ENCODE measurements at regions of chr3 and their contacts with region 1.

Region 1: DNA sequence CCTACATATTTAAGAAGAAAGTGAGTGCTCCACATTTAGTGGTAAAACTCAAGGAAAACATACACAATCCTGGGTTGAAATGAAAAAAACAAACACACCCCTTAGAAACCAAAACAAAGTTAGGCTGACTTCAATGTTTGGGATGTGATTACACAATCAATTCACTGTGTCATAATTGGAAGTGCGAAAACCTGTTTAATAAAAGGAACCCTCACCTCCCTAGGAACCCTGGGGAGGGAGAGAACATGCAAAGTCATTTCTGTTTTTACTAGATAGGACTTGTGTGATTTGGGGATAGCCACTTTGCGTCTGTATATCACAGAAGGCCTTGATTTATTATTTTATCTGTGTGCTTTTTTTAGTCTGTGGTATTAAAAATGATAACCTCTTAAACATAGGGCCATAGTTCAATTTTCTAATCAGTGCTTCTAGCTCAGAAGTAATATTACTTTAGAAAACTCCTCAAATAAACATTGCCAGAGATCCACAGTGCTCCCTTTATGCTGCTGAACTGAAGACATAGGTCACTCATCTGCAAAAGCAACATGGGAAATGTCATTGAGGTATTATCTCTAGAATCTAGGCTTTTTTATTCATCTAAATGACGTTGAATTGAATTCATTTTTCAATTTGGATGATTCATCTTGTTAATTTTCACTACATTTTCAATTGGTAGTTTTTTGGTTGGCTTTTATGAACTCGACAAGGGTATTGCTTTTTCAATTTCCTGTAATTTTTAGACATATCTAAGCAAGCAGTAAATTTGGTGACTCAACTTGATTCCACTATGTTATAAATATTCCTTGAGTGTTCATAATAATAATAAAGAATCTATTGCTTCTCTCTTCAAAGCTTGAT is 275.2 kb downstream of the NFKBIZ start:
- DNase-seq: peak; percentile 94
- H3K4me3 ChIP-seq: no peak overlapping the region
- H3K27ac ChIP-seq: peak overlapping the region; percentile 99
- H3K4me1 ChIP-seq: peaks cover 19% of the 10 kb centered on the region
- H3K27me3 ChIP-seq: no peaks in the 10 kb centered on the region
- CTCF ChIP-seq: no peak

Region 2: GRCh38 chr3:101861212-101861788 is 263.2 kb before region 1 on chr3:
- CTCF ChIA-PET with region 1: no interaction called
- dilution Hi-C with region 1: no loop called
- in situ Hi-C with region 1: no loop called
- intact Hi-C with region 1: loop called (anchors 5 kb)
- DNase-seq: no peak
- H3K4me3 ChIP-seq: no peak overlapping the region
- H3K27ac ChIP-seq: no peak overlapping the region
- H3K4me1 ChIP-seq: no peaks in the 10 kb centered on the region
- H3K27me3 ChIP-seq: no peaks in the 10 kb centered on the region
- CTCF ChIP-seq: no peak

Region 3: DNA sequence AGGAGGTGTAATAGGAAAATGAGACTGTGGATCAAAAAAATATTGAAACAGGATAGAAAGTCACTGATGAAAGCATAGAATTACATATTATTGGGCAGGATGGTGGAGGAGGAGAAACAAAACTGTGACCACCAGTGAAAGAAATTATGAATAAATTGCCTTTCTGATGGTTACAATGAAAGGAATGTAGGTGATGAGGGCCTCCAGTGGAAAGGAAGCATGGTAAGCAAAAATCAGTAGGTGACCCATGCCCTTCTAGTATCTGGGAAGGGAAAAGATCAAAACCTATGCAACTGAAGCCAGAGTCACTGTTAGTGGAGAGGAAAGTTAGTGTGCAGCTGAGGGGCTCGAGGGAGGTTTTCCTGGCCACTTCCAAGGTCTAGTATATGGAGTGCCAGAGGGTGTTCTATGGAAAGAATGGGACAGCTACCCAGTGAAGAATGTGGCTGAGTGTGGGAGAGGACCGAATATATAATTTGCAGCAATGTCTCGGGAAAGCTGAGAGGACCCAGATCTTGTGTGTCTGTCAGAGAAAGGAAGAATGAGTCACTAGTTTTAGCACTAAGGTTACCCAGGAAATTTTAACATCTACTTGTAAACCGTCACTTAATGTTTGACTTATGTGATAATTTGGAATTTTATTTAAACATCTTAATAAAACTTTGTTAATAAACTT is 129.0 kb before region 1 on chr3:
- CTCF ChIA-PET with region 1: no interaction called
- dilution Hi-C with region 1: no loop called
- in situ Hi-C with region 1: no loop called
- intact Hi-C with region 1: loop called (anchors 1 kb)
- DNase-seq: no peak
- H3K4me3 ChIP-seq: no peak overlapping the region
- H3K27ac ChIP-seq: no peak overlapping the region
- H3K4me1 ChIP-seq: peaks cover 30% of the 10 kb centered on the region
- H3K27me3 ChIP-seq: no peaks in the 10 kb centered on the region
- CTCF ChIP-seq: no peak

Region 4: GRCh38 chr3:102195198-102195948 is 70.8 kb after region 1 on chr3:
- CTCF ChIA-PET with region 1: no interaction called
- dilution Hi-C with region 1: no loop called
- in situ Hi-C with region 1: no loop called
- intact Hi-C with region 1: loop called (anchors 1 kb)
- DNase-seq: peak; percentile 96
- H3K4me3 ChIP-seq: no peak overlapping the region
- H3K27ac ChIP-seq: peak overlapping the region; percentile 94
- H3K4me1 ChIP-seq: peaks cover 62% of the 10 kb centered on the region
- H3K27me3 ChIP-seq: no peaks in the 10 kb centered on the region
- CTCF ChIP-seq: no peak

Measured in mammary epithelial cell (primary cell).